ENCODE measurements at regions of chr17 and their contacts with region 1.

Region 1: DNA sequence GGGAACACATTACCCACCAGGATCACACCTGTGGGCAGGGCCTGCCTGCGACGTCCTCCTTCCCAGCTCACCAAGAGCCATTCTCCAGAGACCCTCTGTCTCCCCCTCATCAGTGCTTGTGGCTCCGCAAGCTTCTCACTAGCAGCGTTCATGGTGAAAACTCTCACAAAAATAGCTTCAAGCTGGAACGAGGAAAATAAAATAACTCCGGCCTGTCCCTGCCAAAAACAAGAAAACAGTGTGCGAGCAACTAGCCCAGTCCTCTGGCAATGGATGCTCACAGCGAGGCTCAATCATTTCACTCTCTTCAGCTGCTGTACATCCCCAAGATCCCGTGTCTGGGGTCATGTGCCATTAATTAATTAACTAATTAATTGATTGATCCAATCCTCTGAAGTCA is 18.0 kb downstream of the SPACA3 start:
- DNase-seq: no peak
- ATAC-seq: no peak
- H3K4me3 ChIP-seq: no peak overlapping the region
- H3K27ac ChIP-seq: no peak overlapping the region
- H3K4me1 ChIP-seq: peaks cover 0 to 8% of the 10 kb centered on the region in 2 experiments; a peak in 1 of 4 replicates
- H3K27me3 ChIP-seq: no peaks in the 10 kb centered on the region
- CTCF ChIP-seq: no peak
- POLR2A ChIP-seq: no peak
- RAD21 ChIP-seq: no peak

Region 2: DNA sequence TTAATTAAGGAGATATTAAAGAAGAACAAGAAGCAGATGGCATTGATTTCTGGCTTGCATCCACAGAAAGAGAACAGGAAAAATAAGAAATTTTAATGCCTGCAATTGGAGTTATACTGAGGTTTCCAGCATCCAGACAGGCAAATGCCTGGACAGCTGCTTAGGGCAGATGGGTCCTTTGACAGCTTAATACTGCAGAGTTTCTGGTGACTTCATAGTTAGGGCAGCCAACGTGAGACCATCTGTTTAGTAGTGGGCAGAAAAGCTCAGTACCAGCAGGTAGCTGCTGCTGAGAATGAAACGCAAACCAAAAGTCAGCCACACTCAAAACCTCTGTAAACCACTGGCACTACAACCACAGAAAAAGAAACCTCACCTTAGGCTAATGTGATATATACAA is 413.0 kb before region 1 on chr17:
- CTCF ChIA-PET with region 1: no interaction called
- POLR2A ChIA-PET with region 1: no interaction called
- RAD21 ChIA-PET with region 1: no interaction called
- intact Hi-C with region 1: no loop called
- DNase-seq: no peak
- ATAC-seq: no peak
- H3K4me3 ChIP-seq: no peak overlapping the region
- H3K27ac ChIP-seq: no peak overlapping the region
- H3K4me1 ChIP-seq: no peaks in the 10 kb centered on the region
- H3K27me3 ChIP-seq: no peaks in the 10 kb centered on the region
- CTCF ChIP-seq: no peak
- POLR2A ChIP-seq: no peak
- RAD21 ChIP-seq: no peak

Region 3: DNA sequence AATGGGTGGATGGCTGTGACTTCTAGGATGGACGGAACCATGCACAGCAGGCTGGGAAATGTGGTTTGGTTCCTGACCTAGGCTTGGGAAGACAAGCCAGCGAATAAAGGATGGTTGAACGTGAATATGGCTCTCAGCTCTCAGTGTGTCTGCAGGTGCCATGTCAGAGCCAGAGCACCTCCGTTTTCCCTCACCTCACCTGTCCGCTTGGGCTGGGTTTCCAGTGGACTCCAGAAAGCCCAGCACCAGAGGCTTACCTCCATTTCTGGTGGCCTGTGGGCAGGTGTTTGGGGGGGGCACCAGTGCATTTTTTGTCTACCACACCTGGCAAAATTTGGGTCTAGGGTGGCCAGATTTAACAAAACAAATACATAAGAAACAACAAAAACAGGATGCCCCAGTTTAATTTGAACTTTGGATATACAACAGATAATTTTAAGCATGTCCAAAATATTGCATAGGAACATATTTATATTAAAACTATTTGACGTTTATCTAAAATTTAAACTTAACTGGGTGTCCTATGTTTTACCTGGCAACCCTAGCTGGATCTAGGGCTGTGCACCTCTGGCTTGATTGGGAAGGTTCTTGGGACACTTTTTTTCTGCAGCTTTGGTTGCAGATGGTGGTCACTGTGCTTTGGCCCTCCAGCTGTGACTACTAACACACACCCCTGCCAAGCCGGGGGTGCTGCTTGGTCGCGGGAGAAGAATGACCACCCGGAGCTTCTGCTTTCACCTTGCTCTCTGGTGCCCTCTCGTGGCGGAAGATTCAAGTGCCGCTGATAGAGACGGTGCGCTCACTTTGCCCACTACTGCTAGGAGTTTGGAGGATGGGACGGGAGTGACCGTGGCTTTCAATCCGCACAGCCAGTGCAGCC is 11.6 kb before region 1 on chr17:
- CTCF ChIA-PET with region 1: interaction called, 21 read pairs
- POLR2A ChIA-PET with region 1: no interaction called
- RAD21 ChIA-PET with region 1: no interaction called
- intact Hi-C with region 1: no loop called
- DNase-seq: peak; percentile 55
- ATAC-seq: peak; percentile 96
- H3K4me3 ChIP-seq: peak overlapping the region; percentile 28 to 30
- H3K27ac ChIP-seq: no peak overlapping the region
- H3K4me1 ChIP-seq: peaks cover 3 to 11% of the 10 kb centered on the region in 2 experiments; a peak in 2 of 4 replicates
- H3K27me3 ChIP-seq: no peaks in the 10 kb centered on the region
- CTCF ChIP-seq: peak; percentile 40 to 89 (median 86); a peak in 5 of 6 replicates
- POLR2A ChIP-seq: no peak
- RAD21 ChIP-seq: peak; percentile 60

Region 4: GRCh38 chr17:33028778-33029177 is 19.1 kb after region 1 on chr17:
- CTCF ChIA-PET with region 1: no interaction called
- POLR2A ChIA-PET with region 1: no interaction called
- RAD21 ChIA-PET with region 1: no interaction called
- intact Hi-C with region 1: no loop called
- DNase-seq: no peak
- ATAC-seq: no peak
- H3K4me3 ChIP-seq: no peak overlapping the region
- H3K27ac ChIP-seq: no peak overlapping the region
- H3K4me1 ChIP-seq: no peaks in the 10 kb centered on the region
- H3K27me3 ChIP-seq: peaks cover 47% of the 10 kb centered on the region
- CTCF ChIP-seq: no peak
- POLR2A ChIP-seq: no peak
- RAD21 ChIP-seq: no peak

Region 5: GRCh38 chr17:33183487-33184026 is 173.9 kb after region 1 on chr17:
- CTCF ChIA-PET with region 1: no interaction called
- POLR2A ChIA-PET with region 1: no interaction called
- RAD21 ChIA-PET with region 1: no interaction called
- intact Hi-C with region 1: no loop called
- DNase-seq: no peak
- ATAC-seq: no peak
- H3K4me3 ChIP-seq: no peak overlapping the region
- H3K27ac ChIP-seq: no peak overlapping the region
- H3K4me1 ChIP-seq: no peaks in the 10 kb centered on the region
- H3K27me3 ChIP-seq: peaks cover 28% of the 10 kb centered on the region; the same call in 1 of the 2 replicates
- CTCF ChIP-seq: no peak
- POLR2A ChIP-seq: no peak
- RAD21 ChIP-seq: no peak